ENCODE measurements at regions of chr20 and their contacts with region 1.

Region 1: DNA sequence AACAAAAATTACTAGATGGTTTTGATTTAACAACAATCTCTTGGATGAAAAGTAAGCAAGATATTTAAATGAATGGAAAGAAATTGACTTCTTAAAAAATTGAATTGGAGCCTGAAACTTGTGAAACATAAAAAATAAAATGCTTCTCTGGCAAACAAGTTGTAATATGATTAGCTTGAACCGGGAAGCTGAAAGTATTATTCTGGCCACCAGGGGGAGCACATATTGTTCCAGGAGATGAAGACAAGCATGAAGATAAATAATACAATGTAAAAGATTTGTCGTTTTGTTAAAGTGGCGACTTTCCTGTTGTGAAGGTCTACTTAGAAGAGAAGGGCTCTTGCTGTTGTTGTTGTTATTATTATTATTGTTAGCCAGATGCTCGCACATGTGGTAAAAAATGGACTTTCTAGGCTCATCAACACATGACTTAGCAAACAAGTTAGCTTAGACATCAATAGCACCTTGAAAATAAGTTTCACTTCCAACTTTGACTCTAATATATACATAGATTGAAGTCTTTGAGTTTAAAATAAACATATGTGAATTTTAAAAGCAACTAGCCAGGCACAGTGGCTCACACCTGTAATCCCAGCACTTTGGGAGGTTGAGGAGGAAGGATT is 14.2 kb downstream of the PAX1 start:
- DNase-seq: peak; percentile 74
- ATAC-seq: no peak
- H3K4me3 Mint-ChIP-seq: no peak overlapping the region
- H3K27ac Mint-ChIP-seq: no peak overlapping the region
- H3K4me1 Mint-ChIP-seq: peaks cover 26% of the 10 kb centered on the region
- H3K27me3 Mint-ChIP-seq: peaks cover 51% of the 10 kb centered on the region
- CTCF ChIP-seq: peak; percentile 69

Region 2: GRCh38 chr20:21615617-21616080 is 104.1 kb before region 1 on chr20:
- CTCF ChIA-PET with region 1: interaction called, 10 read pairs
- POLR2A ChIA-PET with region 1: no interaction called
- DNase-seq: peak; percentile 81
- ATAC-seq: peak; percentile 96
- H3K4me3 Mint-ChIP-seq: no peak overlapping the region
- H3K27ac Mint-ChIP-seq: no peak overlapping the region
- H3K4me1 Mint-ChIP-seq: peaks cover 4% of the 10 kb centered on the region
- H3K27me3 Mint-ChIP-seq: peaks cover 22% of the 10 kb centered on the region
- CTCF ChIP-seq: peak; percentile 41

Region 3: DNA sequence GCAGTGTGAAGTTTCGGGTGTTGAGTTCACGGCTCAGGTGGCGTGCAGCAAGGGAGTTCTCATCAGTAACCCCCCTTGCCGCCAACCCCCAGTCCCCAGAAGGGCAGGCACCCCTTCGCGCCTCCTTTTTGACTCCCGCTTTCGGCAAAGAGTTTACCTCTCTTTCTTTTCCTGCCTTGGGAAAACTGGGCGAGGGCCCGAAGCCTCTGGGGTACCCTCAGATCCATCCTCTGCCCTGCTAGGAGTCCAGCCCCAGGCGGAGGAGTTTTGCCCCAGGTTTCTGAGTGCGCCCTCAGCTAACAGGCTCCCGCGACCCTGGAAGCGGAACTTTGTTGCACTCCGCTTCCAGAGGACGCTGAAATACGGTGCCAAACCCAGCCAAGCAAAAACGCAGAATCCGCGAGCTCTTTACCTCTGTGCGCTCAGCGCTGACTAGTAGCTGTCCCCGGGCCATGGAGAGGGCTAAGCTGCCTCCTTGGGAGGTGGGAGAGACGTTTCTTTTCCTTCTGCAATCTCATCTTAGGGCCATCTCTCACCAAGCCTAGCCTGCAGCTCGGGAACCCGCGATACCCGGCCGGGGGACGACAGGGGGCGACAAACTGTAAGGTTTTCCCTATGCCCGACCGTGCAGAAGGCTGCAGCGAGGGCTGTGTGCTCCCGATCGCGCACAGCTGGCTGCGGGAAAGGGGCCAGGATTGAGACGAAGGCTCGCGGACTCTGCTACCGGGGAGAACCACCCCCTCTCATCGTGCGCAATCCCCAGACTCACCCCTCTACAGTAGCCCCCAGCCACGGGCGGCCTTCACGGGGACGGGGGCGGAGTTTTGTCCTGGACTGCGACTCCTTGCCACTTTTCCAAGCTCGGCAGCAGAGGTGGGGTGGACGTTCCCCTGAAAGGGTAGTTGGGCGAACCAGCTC is 16.9 kb before region 1 on chr20:
- CTCF ChIA-PET with region 1: interaction called, 131 read pairs
- POLR2A ChIA-PET with region 1: interaction called, 3 read pairs
- DNase-seq: peak; percentile 95
- ATAC-seq: peak; percentile 71
- H3K4me3 Mint-ChIP-seq: peak overlapping the region; percentile 57
- H3K27ac Mint-ChIP-seq: no peak overlapping the region
- H3K4me1 Mint-ChIP-seq: peaks cover 70% of the 10 kb centered on the region
- H3K27me3 Mint-ChIP-seq: peaks cover 98% of the 10 kb centered on the region
- CTCF ChIP-seq: peak; percentile 68; the same call in 1 of the 2 replicates

Region 4: DNA sequence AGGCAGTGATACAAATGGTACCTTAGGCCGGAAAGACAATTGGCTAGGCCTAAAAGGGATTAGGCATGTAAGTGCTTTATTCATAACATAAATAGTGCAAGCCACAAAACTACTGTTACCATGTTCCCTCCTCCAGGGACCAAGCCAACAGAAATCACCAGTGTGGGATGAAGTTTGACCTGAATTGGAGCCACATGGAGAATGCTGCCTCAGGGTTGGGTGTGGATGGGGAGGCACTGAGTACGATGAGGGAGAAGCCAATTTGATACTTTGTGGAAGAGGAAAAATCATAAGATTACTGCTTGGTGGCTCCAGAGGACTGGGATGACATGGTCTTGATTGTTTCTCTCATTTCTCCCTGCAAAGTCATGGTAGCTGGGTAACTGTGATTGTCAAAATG is 36.3 kb after region 1 on chr20:
- CTCF ChIA-PET with region 1: interaction called, 14 read pairs
- POLR2A ChIA-PET with region 1: no interaction called
- DNase-seq: no peak
- ATAC-seq: no peak
- H3K4me3 Mint-ChIP-seq: no peak overlapping the region
- H3K27ac Mint-ChIP-seq: no peak overlapping the region
- H3K4me1 Mint-ChIP-seq: no peaks in the 10 kb centered on the region
- H3K27me3 Mint-ChIP-seq: no peaks in the 10 kb centered on the region
- CTCF ChIP-seq: no peak

Region 5: DNA sequence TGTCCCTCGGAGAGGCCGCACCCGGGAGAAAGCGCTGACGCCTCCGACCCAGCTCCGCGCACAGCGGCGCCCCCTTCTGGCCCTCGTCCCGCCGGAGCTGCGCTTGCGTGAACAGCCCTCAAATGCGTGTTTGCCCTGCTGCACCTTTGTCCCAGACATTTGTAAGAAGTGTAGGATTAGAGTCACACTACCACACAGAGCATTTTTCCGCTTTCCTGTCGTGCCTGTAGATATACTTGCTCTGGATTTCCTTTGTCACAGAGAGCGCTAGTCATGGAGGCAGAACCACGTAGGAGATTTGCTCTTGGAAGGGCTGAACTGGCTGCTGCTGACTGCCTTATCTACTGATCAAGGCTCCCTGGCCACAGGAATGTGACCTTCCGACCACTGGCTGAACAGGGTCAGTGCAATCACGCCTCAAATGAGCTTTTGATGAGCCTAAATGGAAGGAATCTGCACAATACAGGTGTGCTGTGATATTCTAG is 48.1 kb after region 1 on chr20:
- CTCF ChIA-PET with region 1: interaction called, 58 read pairs
- POLR2A ChIA-PET with region 1: no interaction called
- DNase-seq: peak; percentile 89
- ATAC-seq: peak; percentile 97
- H3K4me3 Mint-ChIP-seq: peak overlapping the region; percentile 48
- H3K27ac Mint-ChIP-seq: no peak overlapping the region
- H3K4me1 Mint-ChIP-seq: peaks cover 4% of the 10 kb centered on the region
- H3K27me3 Mint-ChIP-seq: peaks cover 18% of the 10 kb centered on the region
- CTCF ChIP-seq: peak; percentile 59; the same call in 1 of the 2 replicates

Region 6: GRCh38 chr20:22106308-22106938 is 386.7 kb after region 1 on chr20:
- CTCF ChIA-PET with region 1: interaction called, 12 read pairs
- POLR2A ChIA-PET with region 1: no interaction called
- DNase-seq: no peak
- ATAC-seq: peak; percentile 71
- H3K4me3 Mint-ChIP-seq: no peak overlapping the region
- H3K27ac Mint-ChIP-seq: no peak overlapping the region
- H3K4me1 Mint-ChIP-seq: no peaks in the 10 kb centered on the region
- H3K27me3 Mint-ChIP-seq: no peaks in the 10 kb centered on the region; the same call in 1 of the 2 replicates
- CTCF ChIP-seq: no peak